ENCODE measurements at regions of chr15 and their contacts with region 1.

Region 1: DNA sequence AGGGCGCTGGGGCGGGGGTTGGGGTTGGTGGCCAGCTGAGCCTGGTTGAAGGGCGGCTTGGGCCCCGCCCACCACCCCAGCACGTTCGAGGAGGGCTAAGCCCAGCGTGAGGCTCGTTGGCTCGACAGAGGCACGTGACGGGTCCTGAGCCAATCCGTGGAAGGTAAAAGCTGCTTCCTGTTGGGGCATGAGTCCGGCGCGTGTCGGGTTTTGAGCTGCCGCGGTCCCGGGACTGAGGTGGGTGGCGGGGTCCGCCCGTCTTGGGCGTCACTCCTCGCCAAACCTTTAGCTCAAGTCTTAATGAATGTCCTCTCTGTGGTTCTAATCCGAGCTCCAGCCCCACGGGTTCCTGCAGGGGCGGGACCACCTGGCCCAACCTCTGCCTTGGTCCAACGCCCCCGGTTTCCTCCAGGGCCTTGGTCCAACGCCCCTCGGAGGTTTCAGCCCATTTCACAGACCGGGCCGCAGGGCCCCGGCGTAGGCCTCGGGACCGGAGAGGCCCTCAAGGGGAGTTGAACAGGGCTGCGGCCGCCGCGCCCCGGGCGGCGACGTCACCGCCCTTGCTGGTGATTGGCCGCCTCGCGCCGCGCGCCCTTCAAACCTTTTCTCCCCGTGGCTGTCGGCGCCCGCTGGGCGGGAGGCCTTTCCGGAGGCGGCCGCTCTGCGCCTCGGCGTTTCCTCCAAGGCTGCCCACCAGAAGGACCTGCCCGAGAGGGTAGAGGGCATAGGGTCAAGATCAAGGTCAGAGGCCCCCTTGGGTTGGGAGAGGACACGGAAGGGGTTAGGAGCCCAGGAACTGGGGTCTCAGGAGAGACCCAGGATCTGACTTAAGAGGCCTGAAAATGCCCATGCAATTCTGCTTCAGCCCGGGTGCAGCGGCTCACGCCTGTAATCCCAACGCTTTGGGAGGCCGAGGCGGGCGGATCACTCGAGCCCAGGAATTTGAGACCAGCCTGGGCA is at the start of gene RCCD1:
- DNase-seq: peak; percentile 94
- H3K4me3 Mint-ChIP-seq: peak within 1 kb of the TSS; percentile 85
- H3K27ac Mint-ChIP-seq: peak within 1 kb of the TSS; percentile 93
- H3K4me1 Mint-ChIP-seq: peaks cover 31% of the 10 kb centered on the region
- H3K27me3 Mint-ChIP-seq: no peaks in the 10 kb centered on the region
- total RNA-seq, gene RCCD1: 31.3 to 32.8 TPM

Region 2: DNA sequence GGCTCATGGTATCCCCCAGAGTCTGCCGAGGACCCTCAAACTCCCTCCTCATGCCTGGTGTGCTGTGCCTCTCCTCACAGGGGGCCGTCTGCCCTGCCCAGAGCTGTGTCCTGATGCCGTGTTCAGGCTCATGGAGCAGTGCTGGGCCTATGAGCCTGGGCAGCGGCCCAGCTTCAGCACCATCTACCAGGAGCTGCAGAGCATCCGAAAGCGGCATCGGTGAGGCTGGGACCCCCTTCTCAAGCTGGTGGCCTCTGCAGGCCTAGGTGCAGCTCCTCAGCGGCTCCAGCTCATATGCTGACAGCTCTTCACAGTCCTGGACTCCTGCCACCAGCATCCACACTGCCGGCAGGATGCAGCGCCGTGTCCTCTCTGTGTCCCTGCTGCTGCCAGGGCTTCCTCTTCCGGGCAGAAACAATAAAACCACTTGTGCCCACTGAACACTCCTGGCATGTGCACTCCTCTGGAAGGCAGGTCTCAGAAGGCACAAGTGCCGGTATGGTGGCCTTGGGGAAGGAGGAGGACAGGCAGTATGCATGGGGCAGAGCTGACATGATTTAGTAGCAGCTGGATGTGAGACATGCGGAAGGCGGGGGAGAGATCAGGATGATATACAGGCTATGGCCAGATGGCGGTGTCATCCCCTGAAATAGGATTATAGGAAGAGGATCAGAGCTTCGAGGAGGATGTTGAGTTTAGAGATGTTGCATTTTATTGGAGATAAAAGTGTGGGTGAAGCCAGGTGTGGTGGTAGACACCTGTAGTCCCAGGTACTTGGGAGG is 59.5 kb before region 1 on chr15:
- CTCF ChIA-PET with region 1: no interaction called
- POLR2A ChIA-PET with region 1: no interaction called
- DNase-seq: no peak
- H3K4me3 Mint-ChIP-seq: no peak overlapping the region
- H3K27ac Mint-ChIP-seq: no peak overlapping the region
- H3K4me1 Mint-ChIP-seq: peaks cover 3% of the 10 kb centered on the region
- H3K27me3 Mint-ChIP-seq: no peaks in the 10 kb centered on the region

Region 3: GRCh38 chr15:90970274-90970673 is 15.3 kb after region 1 on chr15:
- CTCF ChIA-PET with region 1: interaction called, 26 read pairs
- POLR2A ChIA-PET with region 1: interaction called, 7 read pairs
- DNase-seq: no peak
- H3K4me3 Mint-ChIP-seq: no peak overlapping the region
- H3K27ac Mint-ChIP-seq: no peak overlapping the region
- H3K4me1 Mint-ChIP-seq: no peaks in the 10 kb centered on the region
- H3K27me3 Mint-ChIP-seq: no peaks in the 10 kb centered on the region

Region 4: GRCh38 chr15:90994417-90995311 is 39.7 kb after region 1 on chr15 and contains the start of gene PRC1:
- CTCF ChIA-PET with region 1: interaction called, 13 read pairs
- POLR2A ChIA-PET with region 1: interaction called, 31 read pairs
- DNase-seq: peak; percentile 98
- H3K4me3 Mint-ChIP-seq: peak within 1 kb of the TSS; percentile 100
- H3K27ac Mint-ChIP-seq: peak within 1 kb of the TSS; percentile 100
- H3K4me1 Mint-ChIP-seq: peaks cover 40% of the 10 kb centered on the region
- H3K27me3 Mint-ChIP-seq: no peaks in the 10 kb centered on the region
- total RNA-seq, gene PRC1: 158 to 167 TPM

Region 5: GRCh38 chr15:91049378-91050127 is 94.6 kb after region 1 on chr15:
- CTCF ChIA-PET with region 1: interaction called, 28 read pairs
- POLR2A ChIA-PET with region 1: interaction called, 5 read pairs
- DNase-seq: peak; percentile 73
- H3K4me3 Mint-ChIP-seq: no peak overlapping the region
- H3K27ac Mint-ChIP-seq: no peak overlapping the region
- H3K4me1 Mint-ChIP-seq: peaks cover 30% of the 10 kb centered on the region
- H3K27me3 Mint-ChIP-seq: peaks cover 37% of the 10 kb centered on the region

Measured in activated CD4-positive, alpha-beta memory T cell treated with anti-CD3 and anti-CD28 coated beads, Interleukin-2, amount 10 ng/mL, durations not matched to agents 7 days and 5 days (primary cell).